ENCODE measurements at regions of chr17 and their contacts with region 1.

Region 1: DNA sequence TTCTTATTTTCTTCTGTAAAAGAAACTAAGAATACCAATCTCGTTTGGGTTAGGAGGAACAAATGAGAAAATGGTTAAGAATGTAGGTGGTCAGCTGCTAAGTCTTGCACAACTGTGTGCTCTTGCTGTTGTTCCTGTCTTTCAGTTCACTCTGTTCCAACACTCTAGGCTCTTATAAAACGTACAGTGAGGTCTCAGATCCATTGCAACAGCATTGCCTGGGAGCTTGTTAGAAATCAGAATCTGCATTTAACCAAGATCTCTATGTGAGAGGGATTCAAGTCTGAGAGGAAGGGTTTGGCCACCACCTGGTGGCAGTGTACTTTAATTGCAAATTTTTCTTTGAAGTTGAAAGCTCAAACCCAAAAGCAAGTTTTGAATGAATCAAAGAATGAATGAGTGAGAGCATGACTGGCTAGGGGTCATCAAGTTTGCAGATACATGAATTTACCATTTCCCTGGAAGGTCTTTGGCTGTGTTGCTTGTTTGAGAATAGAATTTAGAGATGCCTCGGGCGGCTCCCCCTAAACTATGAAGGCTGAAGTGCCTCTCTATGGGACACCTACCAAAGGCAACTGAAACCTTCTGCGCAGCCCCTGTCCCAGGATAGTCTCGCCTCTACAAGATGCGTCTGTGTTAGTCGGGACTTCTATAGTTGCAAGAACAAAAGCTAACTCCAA is 2.5 kb downstream of the ALOX15B start:
- DNase-seq: peak; percentile 66
- H3K4me3 ChIP-seq: no peak overlapping the region
- H3K27ac ChIP-seq: no peak overlapping the region
- H3K4me1 ChIP-seq: no peaks in the 10 kb centered on the region
- H3K27me3 ChIP-seq: peaks cover 9 to 14% of the 10 kb centered on the region in 2 experiments
- CTCF ChIP-seq: peak; percentile 39 to 48
- POLR2A ChIP-seq: no peak

Region 2: GRCh38 chr17:7403977-7404736 is 637.2 kb before region 1 on chr17 and contains the start of gene TMEM256:
- CTCF ChIA-PET with region 1: no interaction called
- POLR2A ChIA-PET with region 1: no interaction called
- dilution Hi-C with region 1: no loop called
- intact Hi-C with region 1: no loop called
- DNase-seq: peak; percentile 99
- H3K4me3 ChIP-seq: peak within 1 kb of the TSS; percentile 43 to 61 (median 52)
- H3K27ac ChIP-seq: peak within 1 kb of the TSS; percentile 21
- H3K4me1 ChIP-seq: peaks cover 12% of the 10 kb centered on the region
- H3K27me3 ChIP-seq: no peaks in the 10 kb centered on the region
- CTCF ChIP-seq: peak in 1 of 2 donors; percentile 2
- POLR2A ChIP-seq: peak; percentile 93
- total RNA-seq, gene TMEM256: 57.3 and 67.4 TPM in 2 replicates

Region 3: DNA sequence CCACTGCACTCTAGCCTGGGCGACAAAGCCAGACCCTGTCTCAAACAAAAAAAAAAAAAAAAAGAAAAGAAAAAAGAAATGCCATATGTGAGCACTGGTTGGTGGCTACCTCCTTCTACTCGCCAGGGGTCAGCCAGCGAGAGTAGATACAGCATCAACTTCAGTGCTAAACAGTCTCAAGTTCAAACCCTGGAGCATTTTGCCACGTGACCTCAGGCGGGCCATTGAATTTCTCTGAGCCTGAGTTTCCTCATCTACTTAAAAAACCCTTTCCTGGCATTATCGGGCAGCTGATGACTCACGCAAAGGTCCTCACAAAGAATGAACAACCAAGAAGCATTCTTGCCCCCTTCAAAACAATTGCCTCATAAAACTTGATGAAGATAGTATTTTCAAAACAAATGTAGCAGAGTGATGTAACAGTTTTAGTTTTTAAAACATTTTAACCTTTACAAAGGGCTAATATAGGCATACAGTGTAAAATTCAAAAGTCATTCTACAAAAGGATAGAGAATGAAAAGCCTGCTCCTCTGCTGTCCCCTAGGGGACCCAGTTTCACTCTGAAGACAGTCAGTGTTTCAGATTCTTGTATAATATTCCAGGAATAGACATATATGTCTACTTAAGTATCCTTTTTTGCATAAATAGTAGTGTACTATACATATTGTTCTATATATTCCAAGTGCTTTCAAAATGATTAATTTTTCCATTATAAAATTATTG is 295.5 kb before region 1 on chr17:
- CTCF ChIA-PET with region 1: interaction called, 48 read pairs
- POLR2A ChIA-PET with region 1: no interaction called
- dilution Hi-C with region 1: no loop called
- intact Hi-C with region 1: loop called (anchors 1 kb)
- DNase-seq: peak; percentile 98
- H3K4me3 ChIP-seq: no peak overlapping the region
- H3K27ac ChIP-seq: peak overlapping the region; percentile 58
- H3K4me1 ChIP-seq: peaks cover 17% of the 10 kb centered on the region
- H3K27me3 ChIP-seq: peaks cover 0 to under 1% of the 10 kb centered on the region in 2 experiments
- CTCF ChIP-seq: peak in 1 of 2 donors; percentile 18
- POLR2A ChIP-seq: no peak

Region 4: GRCh38 chr17:7862692-7863437 is 178.5 kb before region 1 on chr17:
- CTCF ChIA-PET with region 1: interaction called, 12 read pairs
- POLR2A ChIA-PET with region 1: no interaction called
- dilution Hi-C with region 1: no loop called
- intact Hi-C with region 1: no loop called
- DNase-seq: peak; percentile 57
- H3K4me3 ChIP-seq: no peak overlapping the region
- H3K27ac ChIP-seq: no peak overlapping the region
- H3K4me1 ChIP-seq: peaks cover 15% of the 10 kb centered on the region
- H3K27me3 ChIP-seq: no peaks in the 10 kb centered on the region
- CTCF ChIP-seq: peak; percentile 46 to 63
- POLR2A ChIP-seq: no peak

Region 5: DNA sequence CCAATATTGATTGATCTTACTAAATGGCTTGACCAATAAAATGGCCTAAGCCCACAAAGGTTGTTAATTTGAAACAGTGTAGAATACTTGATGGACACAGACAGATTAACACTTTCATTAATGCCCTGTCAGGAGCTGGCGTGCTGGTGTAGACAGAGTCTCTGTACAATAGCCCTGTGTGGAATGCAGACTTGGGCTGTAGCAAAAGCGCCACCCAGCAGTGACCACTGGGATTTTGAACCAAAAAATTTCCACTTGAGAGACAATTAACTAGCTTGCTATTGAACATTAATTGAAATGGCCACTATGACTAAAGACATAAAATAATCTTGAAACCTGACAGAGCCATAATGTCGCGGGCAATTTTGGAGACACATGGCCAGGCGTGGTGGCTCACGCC is 58.7 kb before region 1 on chr17:
- CTCF ChIA-PET with region 1: interaction called, 10 read pairs
- POLR2A ChIA-PET with region 1: no interaction called
- dilution Hi-C with region 1: no loop called
- intact Hi-C with region 1: no loop called
- DNase-seq: peak; percentile 33
- H3K4me3 ChIP-seq: no peak overlapping the region
- H3K27ac ChIP-seq: no peak overlapping the region
- H3K4me1 ChIP-seq: peaks cover 4% of the 10 kb centered on the region
- H3K27me3 ChIP-seq: no peaks in the 10 kb centered on the region
- CTCF ChIP-seq: peak in 1 of 2 donors; percentile 8
- POLR2A ChIP-seq: no peak

Region 6: DNA sequence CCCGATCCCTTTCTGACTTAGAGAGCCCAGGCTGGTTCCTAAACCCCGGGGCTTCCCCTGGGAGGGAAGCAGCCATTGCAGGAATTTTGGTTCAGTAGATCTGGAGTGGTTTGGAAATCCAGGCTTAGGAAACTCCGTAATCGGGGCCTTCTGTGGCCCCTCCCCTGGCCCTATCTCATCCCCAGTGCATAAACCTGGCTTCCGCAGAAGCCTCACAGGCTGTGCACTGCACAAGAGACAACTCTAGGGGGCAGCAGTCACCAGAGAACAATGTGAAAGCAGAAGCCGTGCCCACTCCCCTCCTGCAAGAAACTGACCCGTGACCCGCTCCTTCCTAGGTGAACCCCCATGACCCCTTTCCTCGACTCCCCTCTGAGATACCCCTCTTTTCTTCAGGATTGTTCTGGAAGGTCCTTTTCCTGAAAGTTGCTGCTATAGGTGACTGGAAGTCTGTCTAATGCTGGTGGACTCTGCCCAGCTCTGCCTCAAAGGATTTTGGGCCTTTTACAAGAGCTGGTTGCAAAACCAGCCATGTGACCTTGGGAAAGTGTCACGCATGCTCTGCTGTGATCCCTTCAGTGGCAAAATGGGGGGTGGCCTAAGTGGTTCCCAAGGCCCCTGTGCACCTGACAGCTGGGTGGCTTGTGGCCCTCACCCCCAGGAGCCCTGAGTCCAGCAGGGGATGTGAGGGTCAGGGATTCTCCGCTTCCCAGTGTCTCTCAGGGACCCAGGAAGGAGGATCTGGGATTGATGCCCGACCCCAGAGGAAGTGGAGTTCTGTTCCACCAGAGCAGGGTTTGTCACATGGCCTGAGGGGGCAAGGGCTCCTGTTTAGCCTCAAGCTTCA is 24.5 kb before region 1 on chr17:
- CTCF ChIA-PET with region 1: interaction called, 29 read pairs
- POLR2A ChIA-PET with region 1: no interaction called
- dilution Hi-C with region 1: no loop called
- intact Hi-C with region 1: no loop called
- DNase-seq: peak; percentile 12
- H3K4me3 ChIP-seq: no peak overlapping the region
- H3K27ac ChIP-seq: no peak overlapping the region
- H3K4me1 ChIP-seq: no peaks in the 10 kb centered on the region
- H3K27me3 ChIP-seq: peaks cover 6 to 22% of the 10 kb centered on the region in 2 experiments
- CTCF ChIP-seq: peak; percentile 55 to 69
- POLR2A ChIP-seq: no peak

Region 7: DNA sequence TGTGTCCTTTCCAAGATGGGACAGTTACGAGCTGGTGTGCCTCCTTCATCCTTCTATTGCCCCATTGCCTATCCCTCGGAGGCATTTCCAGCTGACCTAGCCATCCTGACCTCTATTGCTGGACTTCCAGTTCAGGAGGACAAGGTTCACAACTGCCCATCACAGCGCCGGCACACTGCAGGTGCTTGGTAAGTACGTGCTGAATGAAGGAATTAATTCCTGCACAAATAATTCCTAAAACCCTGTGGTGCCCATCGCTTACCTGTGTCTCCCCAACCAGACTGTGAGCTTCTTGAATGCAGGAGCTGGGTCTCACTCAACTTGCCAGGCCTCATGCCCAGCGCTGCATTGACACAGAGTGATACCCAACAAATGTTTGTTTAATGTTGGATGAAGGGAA is 10.4 kb after region 1 on chr17:
- CTCF ChIA-PET with region 1: interaction called, 16 read pairs
- POLR2A ChIA-PET with region 1: no interaction called
- dilution Hi-C with region 1: no loop called
- intact Hi-C with region 1: no loop called
- DNase-seq: no peak
- H3K4me3 ChIP-seq: no peak overlapping the region
- H3K27ac ChIP-seq: no peak overlapping the region
- H3K4me1 ChIP-seq: peaks cover 11% of the 10 kb centered on the region
- H3K27me3 ChIP-seq: peaks cover 0 to 2% of the 10 kb centered on the region in 2 experiments
- CTCF ChIP-seq: no peak
- POLR2A ChIP-seq: no peak